ENCODE measurements at regions of chr10 and their contacts with region 1.

Region 1: GRCh38 chr10:102151774-102152544 is at the start of gene NOLC1:
- DNase-seq: peak; percentile 100
- ATAC-seq: peak; percentile 92
- H3K4me3 Mint-ChIP-seq: peak within 1 kb of the TSS; percentile 99
- H3K27ac Mint-ChIP-seq: peak within 1 kb of the TSS; percentile 99
- H3K4me1 Mint-ChIP-seq: peaks cover 49% of the 10 kb centered on the region
- H3K27me3 Mint-ChIP-seq: no peaks in the 10 kb centered on the region
- total RNA-seq, gene NOLC1: 206 to 283 TPM

Region 2: DNA sequence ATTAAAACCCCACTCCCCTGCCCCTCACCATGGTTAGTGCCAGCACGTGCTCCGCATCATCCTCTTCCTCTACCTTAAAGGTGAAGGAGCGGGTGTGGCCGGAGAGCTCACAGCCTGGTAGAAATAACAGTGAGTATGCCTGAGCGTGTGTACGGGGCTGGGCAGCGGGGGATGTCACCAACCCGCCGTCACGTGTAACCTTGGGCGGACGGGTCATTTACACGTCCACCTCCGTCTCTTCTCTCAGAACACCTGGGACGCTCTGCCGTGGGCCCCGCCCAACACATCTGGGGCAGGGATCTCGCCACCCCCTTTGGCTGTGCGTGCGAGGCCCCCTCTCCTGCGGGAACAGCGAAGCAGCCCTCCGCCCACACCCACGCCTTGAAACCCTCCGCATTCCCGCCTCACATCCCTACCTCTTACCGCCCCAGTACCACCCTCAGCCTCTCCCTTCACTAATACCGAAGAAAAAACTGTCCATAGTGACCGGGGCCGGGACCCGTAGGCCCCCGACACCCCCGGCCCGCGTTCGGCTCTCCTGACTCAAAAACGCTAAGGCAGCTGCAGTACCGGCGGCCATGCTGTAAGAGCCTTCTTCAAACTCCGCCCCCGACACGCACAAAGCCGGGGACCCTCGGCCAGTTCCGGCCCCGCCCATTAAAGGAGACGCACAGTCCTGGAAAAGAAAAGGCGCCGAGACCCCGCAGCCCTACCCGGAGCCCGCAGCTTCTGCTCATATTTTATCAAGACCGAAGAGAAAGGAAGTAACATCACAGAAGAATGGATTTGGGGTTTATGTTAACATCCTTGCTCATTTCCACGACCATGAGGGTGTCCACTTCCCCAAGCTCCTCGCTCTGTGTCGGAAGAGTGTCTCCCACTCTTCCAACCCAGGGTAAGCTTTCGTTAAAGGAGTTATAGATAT is 368.9 kb before region 1 on chr10 and contains the start of gene NPM3:
- CTCF ChIA-PET with region 1: no interaction called
- POLR2A ChIA-PET with region 1: no interaction called
- intact Hi-C with region 1: loop called in 1 of 2 experiments (anchors 1 kb)
- DNase-seq: peak; percentile 94
- ATAC-seq: peak; percentile 82
- H3K4me3 Mint-ChIP-seq: peak within 1 kb of the TSS; percentile 94
- H3K27ac Mint-ChIP-seq: peak within 1 kb of the TSS; percentile 97
- H3K4me1 Mint-ChIP-seq: peaks cover 52% of the 10 kb centered on the region
- H3K27me3 Mint-ChIP-seq: peaks cover 6% of the 10 kb centered on the region
- total RNA-seq, gene NPM3: 207 to 214 TPM

Region 3: GRCh38 chr10:102114861-102115618 is 36.9 kb before region 1 on chr10:
- CTCF ChIA-PET with region 1: interaction called, 4 read pairs
- POLR2A ChIA-PET with region 1: interaction called, 6 read pairs
- intact Hi-C with region 1: loop called (anchors 1 kb)
- DNase-seq: peak; percentile 95
- ATAC-seq: peak; percentile 60
- H3K4me3 Mint-ChIP-seq: peak overlapping the region; percentile 81
- H3K27ac Mint-ChIP-seq: peak overlapping the region; percentile 97
- H3K4me1 Mint-ChIP-seq: peaks cover 55% of the 10 kb centered on the region
- H3K27me3 Mint-ChIP-seq: no peaks in the 10 kb centered on the region

Region 4: GRCh38 chr10:102167861-102168260 is 15.9 kb after region 1 on chr10:
- CTCF ChIA-PET with region 1: interaction called, 32 read pairs
- POLR2A ChIA-PET with region 1: interaction called, 8 read pairs
- intact Hi-C with region 1: loop called in 1 of 2 experiments (anchors 2 kb)
- DNase-seq: no peak
- ATAC-seq: no peak
- H3K4me3 Mint-ChIP-seq: no peak overlapping the region
- H3K27ac Mint-ChIP-seq: no peak overlapping the region
- H3K4me1 Mint-ChIP-seq: peaks cover 4% of the 10 kb centered on the region
- H3K27me3 Mint-ChIP-seq: no peaks in the 10 kb centered on the region

Region 5: GRCh38 chr10:102420810-102421644 is 269.1 kb after region 1 on chr10 and contains the start of gene FBXL15:
- CTCF ChIA-PET with region 1: no interaction called
- POLR2A ChIA-PET with region 1: interaction called, 4 read pairs
- intact Hi-C with region 1: loop called in 1 of 2 experiments (anchors 1 kb)
- DNase-seq: peak; percentile 98
- ATAC-seq: peak; percentile 80
- H3K4me3 Mint-ChIP-seq: peak within 1 kb of the TSS; percentile 96
- H3K27ac Mint-ChIP-seq: peak within 1 kb of the TSS; percentile 87
- H3K4me1 Mint-ChIP-seq: peaks cover 30% of the 10 kb centered on the region
- H3K27me3 Mint-ChIP-seq: peaks cover 14% of the 10 kb centered on the region
- total RNA-seq, gene FBXL15: 5.4 to 11.9 TPM

Region 6: DNA sequence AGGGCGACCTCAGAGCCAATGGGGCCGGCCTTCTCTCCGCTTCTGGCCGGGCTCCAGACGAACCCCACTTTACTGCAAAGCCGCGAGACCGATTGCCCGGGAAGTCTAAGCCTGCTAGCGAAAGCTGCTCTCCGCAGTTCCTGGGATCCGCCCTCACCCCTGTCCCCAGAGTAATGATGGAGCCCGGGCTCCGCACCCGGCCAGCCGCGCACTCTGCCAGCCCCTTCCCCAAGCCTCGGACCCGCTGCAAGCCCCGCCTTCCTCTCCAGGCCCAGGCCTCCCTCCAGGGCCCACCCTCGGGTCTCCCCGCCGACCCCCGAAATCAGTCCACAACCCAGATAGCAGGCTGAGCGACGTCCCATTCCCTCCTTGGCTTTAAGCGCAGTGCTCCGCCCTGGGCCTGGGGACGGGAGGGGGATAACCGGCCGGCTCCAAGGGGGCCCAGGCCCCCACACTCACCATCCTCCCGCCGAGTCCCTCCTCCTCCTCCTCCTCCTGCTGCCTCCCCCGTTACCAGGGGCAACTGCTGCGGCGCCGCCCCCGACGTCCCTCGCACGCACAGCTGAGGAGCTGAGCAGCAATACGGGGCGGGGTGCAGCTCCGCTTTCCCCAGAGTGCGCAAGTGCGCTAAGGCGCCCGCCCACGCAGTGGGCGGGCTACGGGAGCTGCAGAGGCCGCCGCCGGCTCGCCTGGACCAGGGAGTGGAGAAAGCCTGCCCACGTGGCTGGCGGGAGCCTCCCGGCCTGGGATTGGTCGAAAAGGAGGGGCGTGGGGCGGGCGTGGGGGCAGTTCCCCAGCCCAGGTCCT is 562.1 kb after region 1 on chr10 and contains the start of gene ARL3:
- CTCF ChIA-PET with region 1: no interaction called
- POLR2A ChIA-PET with region 1: no interaction called
- intact Hi-C with region 1: loop called in 1 of 2 experiments (anchors 1 kb)
- DNase-seq: peak; percentile 99
- ATAC-seq: peak; percentile 90
- H3K4me3 Mint-ChIP-seq: peak within 1 kb of the TSS; percentile 82
- H3K27ac Mint-ChIP-seq: peak within 1 kb of the TSS; percentile 81
- H3K4me1 Mint-ChIP-seq: peaks cover 59% of the 10 kb centered on the region
- H3K27me3 Mint-ChIP-seq: no peaks in the 10 kb centered on the region
- total RNA-seq, gene ARL3: 6.4 to 6.9 TPM

Measured in activated CD4-positive, alpha-beta T cell treated with anti-CD3 and anti-CD28 coated beads for 36 hours (primary cell).